ENCODE measurements at regions of chr5 and their contacts with region 1.

Region 1: DNA sequence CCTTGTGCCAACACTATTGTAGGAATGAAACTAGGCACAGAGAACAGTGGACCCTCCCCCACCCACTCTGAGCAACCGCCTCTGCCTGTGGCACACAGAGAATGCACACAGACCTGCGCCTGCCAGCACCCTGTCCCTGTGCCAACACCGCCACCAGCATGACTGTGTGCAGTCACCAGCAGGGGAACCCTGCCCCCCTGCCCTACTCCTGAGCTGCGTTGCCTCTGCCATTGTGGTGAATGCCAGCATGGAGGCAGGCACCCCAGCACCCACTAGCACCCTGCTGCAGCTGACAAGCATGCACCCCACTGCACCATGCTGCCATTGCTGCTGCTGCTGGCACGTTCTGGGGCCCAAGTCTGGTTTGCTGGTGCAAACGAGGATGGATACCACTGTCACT is 94.4 kb upstream of the PRLR start:
- DNase-seq: no peak
- ATAC-seq: no peak
- H3K4me3 ChIP-seq: no peak overlapping the region
- H3K27ac ChIP-seq: no peak overlapping the region
- H3K4me1 ChIP-seq: peaks cover 7% of the 10 kb centered on the region
- H3K27me3 ChIP-seq: no peaks in the 10 kb centered on the region
- CTCF ChIP-seq: no peak
- EP300 ChIP-seq: no peak
- POLR2A ChIP-seq: no peak
- RAD21 ChIP-seq: no peak

Region 2: DNA sequence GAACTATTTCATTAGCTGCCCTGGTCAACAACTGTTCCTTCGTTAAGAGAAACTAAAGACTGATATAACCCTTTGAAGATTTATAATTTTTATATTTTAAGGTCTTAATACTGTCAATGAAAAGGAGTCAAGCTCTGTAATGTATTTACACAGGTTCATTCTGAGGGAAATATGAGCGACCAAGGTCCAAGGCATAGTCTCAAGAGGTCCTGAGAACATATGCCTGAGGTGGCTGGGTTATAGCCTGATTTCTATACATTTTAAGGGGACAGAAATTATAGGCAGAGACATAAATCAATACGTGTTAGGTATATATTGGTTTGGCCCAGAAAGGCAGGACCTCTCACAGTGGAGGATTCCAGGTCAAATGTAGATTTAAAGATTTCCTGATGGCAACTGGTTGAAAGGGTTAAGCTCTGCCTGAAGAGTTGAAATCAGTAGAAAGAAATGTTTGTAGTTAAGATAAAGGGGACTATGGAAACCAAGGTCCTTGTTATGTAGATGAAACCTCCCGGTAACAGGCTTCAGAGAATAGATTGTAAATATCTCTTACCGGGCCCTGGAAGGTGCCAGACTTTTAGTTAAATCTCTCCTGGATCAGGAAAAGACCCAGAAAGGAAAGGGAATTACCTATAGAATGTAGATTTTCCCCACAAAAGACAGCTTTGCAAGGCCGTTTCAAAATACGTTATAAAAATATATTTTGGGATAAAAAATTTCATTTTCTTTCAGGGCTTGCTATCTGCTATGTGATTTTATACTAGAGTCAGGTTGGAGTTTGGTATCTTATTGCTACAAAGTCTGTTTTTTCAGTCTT is 12.9 kb after region 1 on chr5:
- CTCF ChIA-PET with region 1: interaction called, 5 read pairs
- POLR2A ChIA-PET with region 1: no interaction called
- RAD21 ChIA-PET with region 1: interaction called, 5 read pairs
- SMC1A ChIA-PET with region 1: interaction called, 45 read pairs
- in situ Hi-C with region 1: no loop called
- intact Hi-C with region 1: no loop called
- DNase-seq: no peak
- ATAC-seq: no peak
- H3K4me3 ChIP-seq: no peak overlapping the region
- H3K27ac ChIP-seq: no peak overlapping the region
- H3K4me1 ChIP-seq: no peaks in the 10 kb centered on the region
- H3K27me3 ChIP-seq: no peaks in the 10 kb centered on the region
- CTCF ChIP-seq: no peak
- EP300 ChIP-seq: no peak
- POLR2A ChIP-seq: no peak
- RAD21 ChIP-seq: no peak

Measured in GM12878 (cell line).